Sigmoid colon (tissue), 7 donors: ENCODE measurements at regions of chr13 and their contacts with region 1.

Region 1: GRCh38 chr13:73058736-73059459 is at the start of gene KLF5:
- DNase-seq: peak; percentile 97
- H3K4me3 ChIP-seq: peak within 1 kb of the TSS; percentile 66 to 98 (median 88)
- H3K27ac ChIP-seq: peak within 1 kb of the TSS; percentile 78 to 85 (median 80)
- H3K4me1 ChIP-seq: peaks cover 0 to 18% (median 11%) of the 10 kb centered on the region in 4 donors
- H3K27me3 ChIP-seq: no peaks in the 10 kb centered on the region
- CTCF ChIP-seq: no peak
- EP300 ChIP-seq: no peak
- POLR2A ChIP-seq: peak; percentile 66 to 94
- total RNA-seq, gene KLF5: 2.3 to 3.6 (median 3.0) TPM

Region 2: DNA sequence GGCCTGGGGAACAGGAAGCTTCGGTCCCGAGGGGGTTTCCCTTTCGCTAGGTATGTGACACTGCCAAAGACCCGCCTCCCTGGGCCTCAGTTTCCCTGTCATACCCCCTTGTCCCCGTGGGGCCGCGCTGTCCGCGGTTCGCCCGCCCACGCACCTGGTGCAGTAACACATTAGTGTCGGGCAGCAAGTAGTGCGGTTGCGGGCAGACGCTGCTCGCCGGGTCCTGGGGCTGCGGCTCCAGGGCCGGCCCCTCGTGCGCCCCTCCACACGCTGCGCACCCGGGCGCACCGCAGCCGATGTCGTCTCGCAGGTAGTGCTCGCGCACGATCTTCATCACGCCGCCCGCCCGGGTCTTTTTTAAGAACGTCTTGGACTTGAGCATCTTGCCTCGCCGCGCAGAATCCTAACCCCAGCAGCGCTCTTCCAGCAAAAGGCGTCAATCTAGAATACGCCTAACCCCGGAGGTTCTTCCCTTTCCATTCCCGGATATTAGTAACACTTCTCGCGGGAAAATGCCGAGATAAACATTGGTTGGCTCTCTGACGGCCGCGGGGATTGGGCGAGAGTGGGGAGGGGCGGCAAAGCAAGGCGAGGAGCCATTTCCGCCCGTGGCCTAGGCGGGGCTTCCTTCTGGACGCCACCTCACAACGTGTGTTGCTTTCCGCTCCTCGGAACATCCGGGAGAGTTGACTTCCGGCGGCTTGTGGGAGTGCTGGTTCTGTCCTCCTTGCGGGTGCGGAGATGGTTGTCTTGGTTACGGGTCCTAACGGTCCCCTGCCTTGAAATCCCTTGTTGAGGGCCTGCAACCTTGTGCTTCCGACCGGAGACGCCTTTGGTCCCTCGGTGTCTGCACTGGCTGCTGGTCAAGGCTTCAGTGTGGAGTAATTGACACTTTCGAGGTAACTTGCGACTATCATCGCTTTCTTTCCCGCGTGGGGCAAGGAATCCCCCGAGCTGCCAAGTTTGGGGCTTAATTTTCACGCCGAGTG is 277.2 kb before region 1 on chr13 and contains the starts of genes DIS3 and PIBF1:
- intact Hi-C with region 1: loop called (anchors 5 kb)
- DNase-seq: peak; percentile 98
- H3K4me3 ChIP-seq: peak within 1 kb of the TSS; percentile 82 to 95 (median 94)
- H3K27ac ChIP-seq: peak within 1 kb of the TSS; percentile 87 to 92 (median 88)
- H3K4me1 ChIP-seq: peaks cover 0 to 41% (median 32%) of the 10 kb centered on the region in 4 donors
- H3K27me3 ChIP-seq: no peaks in the 10 kb centered on the region
- CTCF ChIP-seq: no peak
- EP300 ChIP-seq: peak in 2 of 4 donors; percentile 6 to 20
- POLR2A ChIP-seq: peak; percentile 38 to 66
- total RNA-seq, gene DIS3: 13.6 to 24.5 (median 19.5) TPM
- total RNA-seq, gene PIBF1: 17.7 to 24.0 (median 20.9) TPM

Region 3: GRCh38 chr13:73708393-73708985 is 649.6 kb after region 1 on chr13:
- intact Hi-C with region 1: loop called (anchors 5 kb)
- DNase-seq: no peak
- H3K4me3 ChIP-seq: no peak overlapping the region
- H3K27ac ChIP-seq: no peak overlapping the region
- H3K4me1 ChIP-seq: no peaks in the 10 kb centered on the region
- H3K27me3 ChIP-seq: no peaks in the 10 kb centered on the region
- CTCF ChIP-seq: peak in 3 of 4 experiments; percentile 56 to 76 (median 67)
- EP300 ChIP-seq: no peak
- POLR2A ChIP-seq: no peak